ENCODE measurements at regions of chr6 and their contacts with region 1.

Region 1: DNA sequence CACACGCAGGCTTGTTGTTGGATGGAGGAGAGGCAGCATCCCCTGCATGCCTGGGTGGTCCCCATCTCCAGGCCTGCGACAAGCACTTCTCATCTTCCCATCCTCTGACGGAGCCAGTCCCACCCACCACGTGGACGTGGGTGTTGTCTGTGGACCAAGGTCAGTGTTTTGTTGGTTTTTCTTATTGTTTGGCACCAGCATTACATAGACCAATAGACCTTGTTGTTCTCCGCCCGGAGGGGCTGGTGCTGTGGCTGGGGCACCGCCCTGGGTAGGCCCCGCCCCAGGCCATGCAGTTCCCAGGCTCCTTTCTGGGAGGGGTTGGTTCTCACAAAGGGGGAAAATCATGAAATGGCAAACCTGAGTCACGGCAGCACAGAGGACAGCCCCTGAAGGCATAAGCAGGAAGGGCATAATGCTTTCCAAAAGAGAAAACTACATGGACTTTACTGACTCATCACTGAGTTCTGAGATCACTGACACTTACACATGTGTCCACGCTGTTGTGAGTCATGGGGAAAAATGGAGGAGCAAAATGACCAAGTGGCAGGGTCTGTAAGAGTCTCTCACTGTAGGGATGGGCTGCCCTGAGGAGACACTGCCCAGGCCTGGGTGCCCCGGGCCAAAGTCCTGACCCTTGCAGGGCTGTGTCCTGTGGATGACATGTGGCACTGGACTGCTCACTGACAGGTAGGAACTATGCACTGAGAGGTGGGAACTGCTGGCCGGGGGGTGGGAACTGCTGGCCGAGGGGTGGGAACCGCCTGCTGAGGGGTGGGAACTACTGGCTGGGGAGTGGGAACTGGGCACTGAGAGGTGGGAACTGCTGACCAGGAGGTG is 90.7 kb downstream of the THBS2 start:
- DNase-seq: peak in 2 of 3 donors; percentile 75 to 85
- ATAC-seq: peak; percentile 61 to 90
- H3K4me3 ChIP-seq: no peak overlapping the region
- H3K27ac ChIP-seq: peak overlapping the region; percentile 5
- H3K4me1 ChIP-seq: peaks cover 2% of the 10 kb centered on the region
- H3K27me3 ChIP-seq: no peaks in the 10 kb centered on the region

Region 2: GRCh38 chr6:169070506-169071176 is 92.3 kb before region 1 on chr6:
- intact Hi-C with region 1: loop called in 1 of 4 experiments (anchors 5 kb)
- DNase-seq: peak; percentile 89 to 91 (median 90)
- ATAC-seq: peak; percentile 96
- H3K4me3 ChIP-seq: no peak overlapping the region
- H3K27ac ChIP-seq: peak overlapping the region; percentile 66
- H3K4me1 ChIP-seq: no peaks in the 10 kb centered on the region
- H3K27me3 ChIP-seq: no peaks in the 10 kb centered on the region

Region 3: GRCh38 chr6:169212897-169213813 is 50.2 kb after region 1 on chr6:
- intact Hi-C with region 1: loop called in 1 of 4 experiments (anchors 10 kb)
- DNase-seq: peak; percentile 94 to 98 (median 98)
- ATAC-seq: peak; percentile 99
- H3K4me3 ChIP-seq: peak overlapping the region; percentile 32
- H3K27ac ChIP-seq: peak overlapping the region; percentile 83
- H3K4me1 ChIP-seq: no peaks in the 10 kb centered on the region
- H3K27me3 ChIP-seq: no peaks in the 10 kb centered on the region